Activated CD4-positive, alpha-beta T cell treated with anti-CD3 and anti-CD28 coated beads, Interleukin-2, amount 10 ng/mL, durations not matched to agents 24 days and 14 days (primary cell): ENCODE measurements at regions of chr10 and their contacts with region 1.

Region 1: GRCh38 chr10:1109795-1110673 is 53.8 kb downstream of the WDR37 start:
- DNase-seq: peak; percentile 93
- H3K4me3 Mint-ChIP-seq: peak overlapping the region; percentile 65
- H3K27ac Mint-ChIP-seq: peak overlapping the region; percentile 86
- H3K4me1 Mint-ChIP-seq: peaks cover 40% of the 10 kb centered on the region
- H3K27me3 Mint-ChIP-seq: no peaks in the 10 kb centered on the region

Region 2: DNA sequence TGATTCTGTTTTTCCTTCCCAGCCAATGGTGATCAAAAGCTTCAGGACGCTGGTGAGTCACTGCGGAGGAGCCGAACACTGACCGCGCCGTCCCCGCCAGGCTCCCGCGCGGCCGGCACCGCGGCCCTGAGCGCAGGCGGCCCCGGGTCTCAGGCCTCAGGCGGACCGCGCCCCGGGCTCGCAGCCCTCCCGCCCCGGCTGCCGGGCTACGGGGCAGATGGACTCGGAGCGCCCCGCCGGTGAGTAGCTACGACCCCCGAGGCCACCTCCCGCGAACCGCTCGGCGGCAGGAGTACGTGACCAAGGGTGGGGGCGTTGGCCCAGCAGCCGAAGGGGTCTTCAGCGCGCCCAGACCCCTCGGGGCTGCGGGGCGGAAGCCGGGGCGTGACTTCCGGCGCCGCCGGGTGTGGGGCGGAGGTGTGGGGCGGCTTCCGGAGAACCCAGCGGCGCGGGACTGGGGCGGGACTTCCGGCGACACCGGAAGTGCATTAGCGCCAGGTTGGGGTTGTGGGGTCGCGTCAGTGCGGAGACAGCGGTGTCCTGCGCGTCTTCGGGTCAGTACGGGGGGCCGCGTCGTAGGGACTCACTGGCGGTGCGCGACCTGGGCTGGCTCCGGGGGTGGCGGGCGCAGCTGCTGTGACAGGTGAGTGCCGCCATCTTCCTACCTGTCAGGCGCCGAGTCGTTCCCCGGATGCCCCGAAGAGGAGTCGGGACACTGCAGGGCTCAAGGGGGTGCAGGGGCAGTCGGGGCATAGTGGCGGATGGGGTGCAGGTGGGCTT is 53.5 kb before region 1 on chr10 and contains the start of gene WDR37:
- intact Hi-C with region 1: loop called (anchors 5 kb)
- DNase-seq: peak; percentile 97
- H3K4me3 Mint-ChIP-seq: peak within 1 kb of the TSS; percentile 92
- H3K27ac Mint-ChIP-seq: peak within 1 kb of the TSS; percentile 93
- H3K4me1 Mint-ChIP-seq: peaks cover 70% of the 10 kb centered on the region
- H3K27me3 Mint-ChIP-seq: no peaks in the 10 kb centered on the region
- total RNA-seq, gene WDR37: 17.4 and 18.1 TPM in 2 replicates

Region 3: GRCh38 chr10:1070921-1071349 is 39.1 kb before region 1 on chr10:
- intact Hi-C with region 1: no loop called
- DNase-seq: no peak
- H3K4me3 Mint-ChIP-seq: no peak overlapping the region
- H3K27ac Mint-ChIP-seq: no peak overlapping the region
- H3K4me1 Mint-ChIP-seq: peaks cover 34% of the 10 kb centered on the region
- H3K27me3 Mint-ChIP-seq: no peaks in the 10 kb centered on the region

Region 4: GRCh38 chr10:1084011-1084950 is 25.8 kb before region 1 on chr10:
- intact Hi-C with region 1: no loop called
- DNase-seq: no peak
- H3K4me3 Mint-ChIP-seq: no peak overlapping the region
- H3K27ac Mint-ChIP-seq: no peak overlapping the region
- H3K4me1 Mint-ChIP-seq: peaks cover 10% of the 10 kb centered on the region
- H3K27me3 Mint-ChIP-seq: no peaks in the 10 kb centered on the region

Region 5: DNA sequence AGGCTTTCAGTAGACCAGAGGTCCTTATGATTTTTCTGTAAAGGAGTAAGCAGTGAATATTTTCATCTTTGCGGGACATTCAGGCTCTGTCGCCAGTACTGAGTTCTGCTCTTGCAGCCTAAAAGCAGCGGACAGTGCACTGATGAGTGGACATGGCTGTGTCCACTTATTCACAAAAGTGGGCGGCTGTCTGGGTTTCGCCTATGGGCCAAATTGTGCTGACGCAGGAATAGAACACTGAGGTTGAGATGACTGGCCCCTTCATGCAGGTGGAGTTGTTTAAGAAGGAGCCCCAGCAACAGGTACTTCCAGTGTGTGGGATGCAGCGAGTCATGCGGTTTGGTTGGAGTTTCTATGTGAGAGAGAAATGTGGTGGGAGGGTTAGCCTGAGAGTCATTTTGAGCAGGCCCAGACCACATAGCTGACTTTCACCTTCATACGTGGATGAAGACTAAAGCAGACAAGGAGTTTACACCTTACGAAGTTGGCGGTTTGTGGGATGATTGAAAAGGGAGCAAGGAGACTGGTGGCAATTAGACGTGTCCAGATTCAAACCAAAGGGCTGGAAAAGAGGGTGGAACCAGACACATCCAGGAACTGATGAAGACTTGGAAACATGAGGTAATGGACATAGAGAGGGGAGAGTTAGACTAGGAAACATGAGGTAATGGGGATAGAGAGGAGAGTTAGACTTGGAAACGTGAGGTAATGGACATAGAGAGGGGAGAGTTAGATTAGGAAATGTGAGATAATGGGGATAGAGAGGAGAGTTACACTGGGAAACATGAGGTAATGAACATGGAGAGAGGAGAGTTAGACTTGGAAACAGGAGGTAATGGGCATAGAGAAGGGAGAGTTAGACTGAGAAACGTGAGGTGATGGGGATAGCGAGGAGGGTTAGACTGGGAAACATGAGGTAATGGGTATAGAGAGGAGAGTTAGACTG is 15.6 kb before region 1 on chr10:
- intact Hi-C with region 1: loop called (anchors 2 kb)
- DNase-seq: peak; percentile 73
- H3K4me3 Mint-ChIP-seq: no peak overlapping the region
- H3K27ac Mint-ChIP-seq: no peak overlapping the region
- H3K4me1 Mint-ChIP-seq: peaks cover 15% of the 10 kb centered on the region
- H3K27me3 Mint-ChIP-seq: no peaks in the 10 kb centered on the region

Region 6: GRCh38 chr10:1120801-1121211 is 10.8 kb after region 1 on chr10:
- intact Hi-C with region 1: no loop called
- DNase-seq: no peak
- H3K4me3 Mint-ChIP-seq: no peak overlapping the region
- H3K27ac Mint-ChIP-seq: no peak overlapping the region
- H3K4me1 Mint-ChIP-seq: peaks cover 32% of the 10 kb centered on the region
- H3K27me3 Mint-ChIP-seq: no peaks in the 10 kb centered on the region

Region 7: DNA sequence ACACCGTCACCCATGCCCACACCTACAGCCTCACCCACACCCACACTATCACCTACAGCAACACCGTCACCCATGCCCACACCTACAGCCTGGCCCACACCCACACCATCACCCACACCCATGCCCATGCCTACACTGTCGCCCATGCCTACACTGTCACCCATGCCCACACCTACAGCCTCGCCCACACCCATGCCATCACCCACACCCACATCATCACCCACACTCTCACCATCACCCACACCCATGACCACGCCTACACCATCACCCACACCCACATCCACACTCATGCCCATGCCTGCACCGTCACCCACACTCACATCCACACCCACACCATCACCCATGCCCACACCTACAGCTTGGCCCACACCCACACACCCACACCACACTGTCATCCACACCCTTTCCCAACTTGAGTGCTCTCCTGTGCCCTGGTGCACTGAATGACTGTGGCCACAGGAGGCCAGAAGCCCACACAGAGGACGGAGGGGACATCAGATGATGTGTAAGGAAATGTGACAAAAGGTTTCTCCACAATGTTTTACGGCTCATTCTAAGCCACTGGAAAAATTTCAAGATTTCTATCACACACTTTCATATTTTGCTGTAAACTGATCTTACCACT is 99.4 kb after region 1 on chr10:
- intact Hi-C with region 1: no loop called
- DNase-seq: no peak
- H3K4me3 Mint-ChIP-seq: no peak overlapping the region
- H3K27ac Mint-ChIP-seq: no peak overlapping the region
- H3K4me1 Mint-ChIP-seq: no peaks in the 10 kb centered on the region
- H3K27me3 Mint-ChIP-seq: no peaks in the 10 kb centered on the region

Region 8: DNA sequence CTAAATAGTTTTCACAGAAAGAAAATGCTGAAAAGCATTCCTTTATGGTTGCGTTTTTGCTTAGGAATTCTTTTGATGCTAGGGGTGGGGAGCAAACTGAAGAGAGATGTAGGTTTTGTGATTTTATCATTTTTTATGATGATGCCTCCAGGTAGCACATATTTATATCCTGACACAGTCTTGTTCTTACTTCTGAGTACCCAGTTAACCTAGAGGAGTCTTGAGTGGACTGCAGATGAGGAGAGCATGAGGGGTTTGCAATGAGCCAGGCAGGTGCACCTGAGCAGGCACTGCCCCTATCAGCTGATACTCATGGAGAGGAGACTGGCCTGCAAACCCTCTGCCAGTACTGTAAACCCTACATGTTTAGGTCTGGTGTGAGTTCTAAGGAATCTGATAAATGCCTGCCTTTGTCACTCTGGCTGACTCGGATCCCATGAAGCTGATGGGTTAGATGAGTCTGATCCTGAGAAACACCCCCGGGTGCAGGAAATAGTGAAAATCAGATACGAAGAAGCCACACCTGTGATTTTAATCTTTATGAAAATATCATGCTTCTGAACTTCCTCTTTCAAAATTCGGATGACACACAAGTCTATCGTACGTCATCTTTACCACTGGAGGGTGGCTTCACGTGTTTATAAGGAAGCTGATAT is 249.0 kb after region 1 on chr10:
- intact Hi-C with region 1: loop called (anchors 10 kb)
- DNase-seq: no peak
- H3K4me3 Mint-ChIP-seq: no peak overlapping the region
- H3K27ac Mint-ChIP-seq: no peak overlapping the region
- H3K4me1 Mint-ChIP-seq: peaks cover 6% of the 10 kb centered on the region
- H3K27me3 Mint-ChIP-seq: peaks cover 12% of the 10 kb centered on the region

Region 9: DNA sequence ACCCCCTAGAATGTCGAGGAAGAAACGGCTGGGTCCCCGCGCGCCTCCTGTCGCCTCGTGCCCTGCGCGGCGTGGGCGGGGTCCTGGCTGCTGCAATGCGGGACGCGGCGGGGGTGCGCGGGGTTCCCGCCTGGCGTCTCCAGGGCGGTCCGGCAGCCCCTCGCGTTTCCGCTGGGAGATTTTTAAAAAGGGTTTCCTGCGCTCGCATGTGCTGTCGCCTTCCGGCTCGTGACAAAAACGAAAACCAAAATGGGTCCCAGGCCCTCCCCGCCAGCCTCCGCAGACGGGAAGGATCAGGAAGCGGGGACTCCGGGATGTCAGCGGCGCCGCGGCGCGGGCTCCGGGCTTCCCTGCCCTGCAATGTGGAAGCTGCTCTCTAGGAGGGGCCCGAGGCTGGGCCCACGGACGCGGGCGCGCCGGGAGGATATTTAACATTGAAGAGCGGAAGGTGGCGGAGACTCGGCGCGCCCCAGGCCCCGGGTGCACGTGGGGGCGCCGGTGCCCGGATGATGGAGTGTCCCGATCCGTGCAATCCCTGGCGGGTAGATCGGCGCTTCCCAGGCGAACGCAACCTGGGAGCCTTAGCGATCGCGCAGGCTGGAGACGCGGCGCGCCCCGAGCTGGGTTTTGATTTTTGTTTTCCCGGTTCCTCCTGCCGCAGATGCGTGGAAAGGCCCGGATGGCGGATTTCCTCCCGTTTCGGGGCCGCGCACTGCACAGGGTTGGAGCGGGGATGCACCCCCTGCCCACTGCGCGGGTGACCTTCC is 1958.3 kb after region 1 on chr10:
- intact Hi-C with region 1: loop called (anchors 10 kb)
- DNase-seq: peak; percentile 92
- H3K4me3 Mint-ChIP-seq: peak overlapping the region; percentile 93
- H3K27ac Mint-ChIP-seq: peak overlapping the region; percentile 95
- H3K4me1 Mint-ChIP-seq: peaks cover 36% of the 10 kb centered on the region
- H3K27me3 Mint-ChIP-seq: peaks cover 19% of the 10 kb centered on the region